ENCODE measurements at regions of chr10 and their contacts with region 1.

Region 1: DNA sequence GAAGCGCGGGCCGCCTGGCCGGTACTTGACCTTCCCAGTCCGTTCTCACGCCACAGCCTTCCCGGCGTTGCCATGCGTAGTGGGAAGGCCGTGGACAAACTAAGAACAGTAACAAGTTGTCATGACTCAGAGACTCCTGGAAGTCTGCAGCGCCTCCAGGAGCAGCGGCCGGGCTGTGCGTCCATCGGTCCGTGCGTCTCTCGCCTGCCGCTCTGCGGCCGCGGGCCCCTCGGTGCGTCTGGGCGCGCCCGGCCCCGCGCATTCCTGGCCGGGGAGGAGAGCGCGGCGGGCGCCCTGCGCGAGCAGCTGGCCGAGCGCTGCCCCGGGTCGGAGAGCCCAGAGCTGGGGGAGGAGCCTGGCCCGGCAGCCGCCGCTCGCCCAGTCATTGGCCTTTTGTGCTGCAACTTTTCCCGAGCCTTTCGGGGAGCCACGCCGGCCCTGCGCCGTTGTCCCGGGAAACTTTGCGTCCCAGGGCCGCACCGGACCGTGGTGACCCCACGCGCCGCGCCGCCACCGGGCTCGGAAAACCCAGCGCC is 123.7 kb downstream of the TACC2 start:
- DNase-seq: peak; percentile 82 to 86
- ATAC-seq: peak; percentile 82

Region 2: DNA sequence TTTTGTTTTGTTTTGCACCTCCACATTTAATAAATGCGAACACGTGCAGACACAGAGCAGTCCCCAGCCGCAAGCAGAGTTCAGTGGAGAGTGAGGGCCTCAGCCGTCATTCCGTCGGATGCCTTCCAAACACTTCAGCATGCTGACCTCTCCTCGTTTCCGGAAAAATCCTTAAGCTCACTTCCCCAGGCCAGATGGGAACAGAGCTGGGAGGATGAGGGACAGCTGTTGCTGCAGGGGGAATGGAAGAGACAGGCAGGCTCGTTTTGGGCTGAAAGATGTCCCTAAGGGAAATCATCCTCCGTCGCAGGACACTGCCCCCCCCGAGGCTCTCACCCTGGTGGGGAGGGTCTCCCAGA is 497.3 kb before region 1 on chr10:
- intact Hi-C with region 1: no loop called
- DNase-seq: no peak
- ATAC-seq: no peak

Region 3: GRCh38 chr10:121994390-121994961 is 118.2 kb before region 1 on chr10:
- intact Hi-C with region 1: loop called in 1 of 2 experiments (anchors 5 kb)
- DNase-seq: peak; percentile 65 to 79
- ATAC-seq: peak; percentile 78

Region 4: GRCh38 chr10:122051251-122051996 is 61.3 kb before region 1 on chr10:
- intact Hi-C with region 1: loop called in 1 of 2 experiments (anchors 5 kb)
- DNase-seq: peak; percentile 71 to 73
- ATAC-seq: peak; percentile 63